Sciatic nerve (tissue), 2 donors: ENCODE measurements at regions of chr17 and their contacts with region 1.

Region 1: GRCh38 chr17:4678427-4679026 is 25.4 kb downstream of the PELP1 start:
- DNase-seq: no peak
- ATAC-seq: no peak

Region 2: GRCh38 chr17:4733073-4733531 is 54.6 kb after region 1 on chr17:
- intact Hi-C with region 1: loop called (anchors 2 kb)
- DNase-seq: no peak
- ATAC-seq: no peak